Activated naive CD4-positive, alpha-beta T cell treated with anti-CD3 and anti-CD28 coated beads, Interleukin-2, amount 10 ng/mL, durations not matched to agents 7 days and 5 days (primary cell): ENCODE measurements at regions of chrX and their contacts with region 1.

Region 1: GRCh38 chrX:119784747-119785446 is 6.5 kb downstream of the RPL39 start:
- DNase-seq: peak; percentile 66
- H3K4me3 Mint-ChIP-seq: no peak overlapping the region
- H3K27ac Mint-ChIP-seq: no peak overlapping the region
- H3K4me1 Mint-ChIP-seq: peaks cover 33% of the 10 kb centered on the region
- H3K27me3 Mint-ChIP-seq: no peaks in the 10 kb centered on the region

Region 2: DNA sequence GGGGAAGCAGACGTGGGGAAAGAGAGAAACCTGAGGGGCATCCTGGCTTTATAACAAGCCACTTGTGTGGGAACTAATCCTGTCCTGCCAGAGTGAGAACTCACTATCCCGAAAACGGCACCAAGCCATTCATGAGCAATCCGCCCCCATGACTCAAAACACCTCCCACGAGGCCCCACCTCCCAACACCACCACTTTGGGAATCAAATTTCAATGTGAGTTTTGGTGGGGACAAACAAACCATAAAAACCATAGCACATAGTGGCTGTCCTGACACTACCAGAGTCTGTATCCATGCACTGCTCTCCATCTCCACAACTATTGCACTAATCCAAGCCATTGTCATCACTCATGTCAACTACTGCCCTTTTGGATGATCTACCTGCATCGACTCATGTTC is 63.4 kb before region 1 on chrX:
- CTCF ChIA-PET with region 1: no interaction called
- DNase-seq: no peak
- H3K4me3 Mint-ChIP-seq: no peak overlapping the region
- H3K27ac Mint-ChIP-seq: no peak overlapping the region
- H3K4me1 Mint-ChIP-seq: no peaks in the 10 kb centered on the region
- H3K27me3 Mint-ChIP-seq: peaks cover 6% of the 10 kb centered on the region

Region 3: DNA sequence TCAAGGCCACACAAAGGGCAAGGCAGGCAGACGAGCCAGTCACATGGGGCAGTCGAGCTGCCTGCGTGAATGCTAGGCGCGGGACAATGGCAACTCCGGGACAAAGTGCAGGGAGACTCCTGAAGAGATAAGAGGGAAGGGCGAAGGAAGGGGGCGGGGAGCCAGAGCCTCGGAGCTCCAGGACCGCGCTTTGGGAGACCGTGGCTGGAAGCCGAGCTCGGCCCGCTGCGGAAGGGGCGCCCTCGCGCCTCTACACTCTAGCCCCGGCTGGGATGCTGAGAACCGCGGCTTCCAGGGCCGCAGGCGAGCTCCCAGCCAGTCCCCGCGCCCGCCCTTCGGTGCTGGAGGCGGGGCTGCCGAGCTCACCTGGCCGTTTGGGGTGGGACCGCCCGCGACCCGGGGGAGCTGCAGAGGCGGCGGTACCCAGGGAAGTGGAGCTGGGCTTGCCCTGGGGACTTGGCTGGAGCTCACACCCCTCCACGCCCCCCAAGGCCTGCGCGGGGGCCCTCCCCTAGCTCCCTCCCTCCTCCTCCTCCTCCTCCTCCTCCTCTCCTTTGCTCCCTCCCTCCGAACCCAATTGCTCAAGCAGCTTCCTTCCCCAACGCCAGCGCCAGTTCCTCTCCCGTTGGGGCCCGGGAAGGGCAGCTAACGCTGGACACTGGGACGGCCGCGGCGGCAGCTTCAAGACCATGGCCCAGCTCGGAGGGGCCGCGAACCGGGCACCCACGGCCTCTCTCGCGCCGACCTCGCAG is 26.7 kb before region 1 on chrX and contains the start of gene SOWAHD:
- CTCF ChIA-PET with region 1: interaction called, 13 read pairs
- DNase-seq: peak; percentile 61
- H3K4me3 Mint-ChIP-seq: peak within 1 kb of the TSS; percentile 73
- H3K27ac Mint-ChIP-seq: peak within 1 kb of the TSS; percentile 99
- H3K4me1 Mint-ChIP-seq: peaks cover 59% of the 10 kb centered on the region
- H3K27me3 Mint-ChIP-seq: no peaks in the 10 kb centered on the region

Region 4: DNA sequence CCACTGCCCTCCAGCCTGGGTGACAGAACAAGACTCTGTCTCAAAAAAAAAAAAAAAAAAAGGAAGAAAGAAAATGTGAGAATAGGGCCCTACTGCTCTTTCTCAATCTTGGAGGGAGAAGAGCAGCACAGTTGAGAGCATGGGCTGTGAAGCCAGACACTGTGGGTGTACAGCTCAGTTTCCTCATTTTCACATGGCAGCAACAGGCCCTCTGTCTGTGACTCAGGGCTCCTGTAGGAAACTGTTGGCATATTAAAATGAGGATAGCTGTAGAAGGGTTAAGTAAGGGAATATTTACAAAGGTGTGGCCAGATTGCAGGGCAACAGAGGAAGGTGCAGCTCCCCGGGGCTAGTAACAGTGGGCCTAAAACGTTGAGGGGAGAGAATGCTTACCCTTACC is 114.2 kb after region 1 on chrX:
- CTCF ChIA-PET with region 1: no interaction called
- DNase-seq: no peak
- H3K4me3 Mint-ChIP-seq: no peak overlapping the region
- H3K27ac Mint-ChIP-seq: no peak overlapping the region
- H3K4me1 Mint-ChIP-seq: no peaks in the 10 kb centered on the region
- H3K27me3 Mint-ChIP-seq: no peaks in the 10 kb centered on the region